ENCODE measurements at regions of chr7 and their contacts with region 1.

Region 1: DNA sequence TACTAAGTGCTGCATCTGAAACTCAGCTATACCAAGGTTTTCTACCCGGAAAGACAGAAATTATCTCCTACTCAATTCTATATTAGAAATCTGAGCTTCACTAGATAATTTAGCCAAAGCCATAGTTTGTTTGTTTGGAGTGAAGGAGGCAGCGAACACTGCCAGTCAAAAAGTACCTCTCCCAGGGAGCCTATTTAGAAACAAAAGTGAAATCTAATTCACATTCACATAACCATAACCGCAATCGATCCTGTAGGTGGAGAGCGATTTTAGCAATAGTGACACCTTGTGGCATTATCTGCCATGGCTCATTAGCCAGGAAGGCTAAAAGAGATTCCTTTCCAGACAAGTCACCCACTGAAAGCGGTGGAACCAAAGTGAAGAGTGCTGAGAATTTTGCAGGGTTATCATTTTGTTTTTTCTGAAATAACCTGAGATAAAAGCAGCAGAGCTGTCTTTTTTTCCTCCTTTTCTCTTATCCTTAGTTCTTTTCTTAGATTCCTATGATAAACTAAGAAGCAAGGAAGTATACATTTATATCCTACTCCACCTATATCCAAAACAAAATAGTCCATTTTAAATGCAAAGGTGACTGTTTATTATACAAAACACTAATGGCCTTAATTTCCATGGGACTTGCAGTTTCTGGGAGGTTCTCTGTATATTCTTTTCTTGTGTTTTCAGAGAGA is 83.7 kb upstream of the BET1 start:
- DNase-seq: peak; percentile 72 to 81
- ATAC-seq: peak; percentile 96 to 98
- H3K4me3 ChIP-seq: peak overlapping the region; percentile 34
- H3K27ac ChIP-seq: peak overlapping the region; percentile 72 to 82
- H3K4me1 ChIP-seq: peaks cover 19% of the 10 kb centered on the region
- CTCF ChIP-seq: peak; percentile 91
- EP300 ChIP-seq: no peak
- POLR2A ChIP-seq: no peak
- RAD21 ChIP-seq: peak; percentile 86 to 92

Region 2: DNA sequence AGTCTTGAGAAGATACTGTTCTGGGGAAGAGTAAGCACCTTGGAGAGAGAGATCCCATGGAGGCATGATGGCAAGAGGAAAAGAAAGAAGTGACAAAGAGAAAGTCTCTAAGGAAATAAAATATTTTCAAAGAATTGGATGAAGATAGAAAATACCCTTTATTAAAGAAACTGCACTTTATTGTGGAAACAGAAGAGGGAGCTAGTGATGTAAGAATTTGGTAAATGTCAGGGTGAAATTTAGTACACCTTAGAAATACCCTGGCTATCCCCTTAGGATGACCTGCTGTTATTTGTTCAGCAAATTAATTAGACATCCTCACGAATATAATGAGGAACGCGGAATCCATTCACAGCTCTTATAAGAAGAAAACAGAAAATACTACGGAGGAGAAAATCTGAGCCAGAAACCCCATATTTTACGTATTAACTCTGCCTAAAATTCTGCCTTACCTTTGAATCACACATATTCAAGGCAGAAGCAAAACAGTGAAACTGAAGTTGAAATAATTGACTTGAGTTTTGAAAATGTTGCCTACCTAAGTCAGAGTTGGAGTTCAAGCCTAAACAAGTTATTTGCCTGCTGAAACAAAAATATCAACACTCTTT is 288.0 kb before region 1 on chr7:
- CTCF ChIA-PET with region 1: interaction called, 15 read pairs
- POLR2A ChIA-PET with region 1: no interaction called
- DNase-seq: peak; percentile 14 to 22
- ATAC-seq: 0 out of 6 replicates have a peak, but pooled peaks of 1 of the 2 experiments have one; percentile 44
- H3K4me3 ChIP-seq: no peak overlapping the region
- H3K27ac ChIP-seq: 0 out of 6 replicates have a peak overlapping the region, but pooled peaks of 1 of the 2 experiments have one; percentile 22
- H3K4me1 ChIP-seq: no peaks in the 10 kb centered on the region
- CTCF ChIP-seq: peak; percentile 78
- EP300 ChIP-seq: no peak
- POLR2A ChIP-seq: no peak
- RAD21 ChIP-seq: peak; percentile 79 to 80

Region 3: DNA sequence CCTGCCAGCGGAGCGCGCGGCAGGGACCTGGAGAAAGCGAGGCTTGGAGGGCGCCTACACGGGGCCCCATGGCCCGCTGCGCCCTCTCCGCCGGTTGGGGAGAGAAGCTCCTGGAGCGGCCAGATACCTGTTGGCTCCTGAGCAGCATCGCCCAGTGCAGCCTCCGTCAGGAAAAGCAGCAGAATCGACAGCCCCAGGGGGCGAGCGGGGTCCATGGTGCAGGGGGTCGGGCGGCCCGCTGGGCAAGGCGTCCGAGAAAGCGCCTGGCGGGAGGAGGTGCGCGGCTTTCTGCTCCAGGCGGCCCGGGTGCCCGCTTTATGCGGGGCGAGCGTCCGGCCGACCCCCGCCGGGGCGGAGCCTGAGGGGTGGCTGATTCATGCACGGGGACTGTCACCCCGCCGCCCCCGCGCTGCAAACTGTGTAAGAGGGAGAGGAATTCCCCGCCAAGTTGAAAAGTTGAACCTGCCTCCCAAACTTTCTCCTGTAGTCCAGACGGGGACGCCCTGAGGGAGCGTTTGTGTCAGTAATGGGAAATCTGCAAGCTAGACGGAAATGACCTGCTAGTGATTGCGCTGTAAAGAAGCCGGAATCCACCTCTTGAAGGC is 197.2 kb before region 1 on chr7 and contains the start of gene TFPI2:
- CTCF ChIA-PET with region 1: interaction called, 29 read pairs
- POLR2A ChIA-PET with region 1: interaction called, 4 read pairs
- DNase-seq: peak; percentile 77 to 94
- ATAC-seq: peak; percentile 87 to 92
- H3K4me3 ChIP-seq: peak within 1 kb of the TSS; percentile 63
- H3K27ac ChIP-seq: peak within 1 kb of the TSS; percentile 74 to 97
- H3K4me1 ChIP-seq: peaks cover 45% of the 10 kb centered on the region
- CTCF ChIP-seq: peak; percentile 40; the same call in 2 of the 3 replicates
- EP300 ChIP-seq: peak in 1 of 2 experiments; percentile 45; a peak in 1 of 5 replicates
- POLR2A ChIP-seq: peak; percentile 92
- RAD21 ChIP-seq: peak; percentile 63 to 75
- polyA plus RNA-seq, gene TFPI2: 128 and 172 TPM in 2 replicates

Region 4: GRCh38 chr7:93902777-93903423 is 184.9 kb before region 1 on chr7:
- CTCF ChIA-PET with region 1: interaction called, 45 read pairs
- POLR2A ChIA-PET with region 1: no interaction called
- DNase-seq: peak in 1 of 2 experiments; percentile 74
- ATAC-seq: peak; percentile 39 to 82; a peak in 3 of 6 replicates
- H3K4me3 ChIP-seq: no peak overlapping the region
- H3K27ac ChIP-seq: peak overlapping the region in 1 of 2 experiments; percentile 62; a peak in 3 of 6 replicates
- H3K4me1 ChIP-seq: peaks cover 25% of the 10 kb centered on the region
- CTCF ChIP-seq: peak; percentile 75
- EP300 ChIP-seq: no peak
- POLR2A ChIP-seq: no peak
- RAD21 ChIP-seq: peak; percentile 74 to 79

Region 5: GRCh38 chr7:94069162-94069739 is 18.6 kb before region 1 on chr7:
- CTCF ChIA-PET with region 1: interaction called, 15 read pairs
- POLR2A ChIA-PET with region 1: no interaction called
- DNase-seq: no peak
- ATAC-seq: no peak
- H3K4me3 ChIP-seq: no peak overlapping the region
- H3K27ac ChIP-seq: peak overlapping the region; percentile 3 to 58; a peak in 5 of 6 replicates
- H3K4me1 ChIP-seq: peaks cover 15% of the 10 kb centered on the region
- CTCF ChIP-seq: no peak
- EP300 ChIP-seq: no peak
- POLR2A ChIP-seq: no peak
- RAD21 ChIP-seq: no peak

Region 6: DNA sequence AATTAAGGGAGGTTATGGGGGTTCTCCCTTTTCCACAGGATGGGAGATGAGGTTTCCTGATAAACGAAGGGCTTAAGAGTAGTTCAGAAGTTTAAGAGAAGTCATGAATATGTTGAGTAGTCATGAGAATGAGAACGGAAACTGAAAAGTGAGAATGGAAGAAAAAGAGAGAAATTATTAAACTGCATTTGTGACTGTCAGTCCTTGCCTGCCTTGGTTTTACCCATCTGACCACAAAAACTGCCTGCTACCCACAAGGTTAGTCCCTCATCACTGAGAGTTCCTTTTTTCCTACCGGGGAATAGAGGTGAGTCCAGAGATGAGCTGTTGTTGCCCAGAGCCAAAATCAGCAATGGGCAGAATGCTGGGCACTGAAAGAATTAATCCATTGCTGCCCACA is 90.4 kb after region 1 on chr7:
- CTCF ChIA-PET with region 1: no interaction called
- POLR2A ChIA-PET with region 1: no interaction called
- DNase-seq: no peak
- ATAC-seq: no peak
- H3K4me3 ChIP-seq: no peak overlapping the region
- H3K27ac ChIP-seq: peak overlapping the region in 1 of 2 experiments; percentile 53; a peak in 3 of 6 replicates
- H3K4me1 ChIP-seq: peaks cover 13% of the 10 kb centered on the region
- CTCF ChIP-seq: no peak
- EP300 ChIP-seq: no peak
- POLR2A ChIP-seq: no peak
- RAD21 ChIP-seq: no peak